ENCODE measurements at regions of chr11 and their contacts with region 1.

Region 1: GRCh38 chr11:61187505-61188130 is 15.7 kb upstream of the PGA3 start:
- DNase-seq: peak; percentile 60
- ATAC-seq: peak; percentile 97
- H3K4me3 ChIP-seq: no peak overlapping the region
- H3K27ac ChIP-seq: no peak overlapping the region
- H3K4me1 ChIP-seq: no peaks in the 10 kb centered on the region
- H3K27me3 ChIP-seq: no peaks in the 10 kb centered on the region
- CTCF ChIP-seq: peak; percentile 90 to 98 (median 96); a peak in 5 of 6 replicates
- EP300 ChIP-seq: no peak
- POLR2A ChIP-seq: no peak
- RAD21 ChIP-seq: peak; percentile 98

Region 2: GRCh38 chr11:60841797-60842667 is 345.6 kb before region 1 on chr11 and contains the start of gene CCDC86:
- CTCF ChIA-PET with region 1: interaction called, 4 read pairs
- POLR2A ChIA-PET with region 1: no interaction called
- RAD21 ChIA-PET with region 1: interaction called, 3 read pairs
- SMC1A ChIA-PET with region 1: interaction called, 4 read pairs
- in situ Hi-C with region 1: loop called (anchors 5 kb)
- intact Hi-C with region 1: no loop called
- DNase-seq: peak; percentile 78
- ATAC-seq: peak; percentile 87
- H3K4me3 ChIP-seq: peak within 1 kb of the TSS; percentile 92
- H3K27ac ChIP-seq: peak within 1 kb of the TSS; percentile 72
- H3K4me1 ChIP-seq: peaks cover 4% of the 10 kb centered on the region
- H3K27me3 ChIP-seq: no peaks in the 10 kb centered on the region
- CTCF ChIP-seq: no peak
- EP300 ChIP-seq: peak in 1 of 2 experiments; percentile 18; a peak in 1 of 4 replicates
- POLR2A ChIP-seq: peak; percentile 73
- RAD21 ChIP-seq: no peak
- polyA plus RNA-seq, gene CCDC86: 2.0 to 4.4 TPM

Region 3: DNA sequence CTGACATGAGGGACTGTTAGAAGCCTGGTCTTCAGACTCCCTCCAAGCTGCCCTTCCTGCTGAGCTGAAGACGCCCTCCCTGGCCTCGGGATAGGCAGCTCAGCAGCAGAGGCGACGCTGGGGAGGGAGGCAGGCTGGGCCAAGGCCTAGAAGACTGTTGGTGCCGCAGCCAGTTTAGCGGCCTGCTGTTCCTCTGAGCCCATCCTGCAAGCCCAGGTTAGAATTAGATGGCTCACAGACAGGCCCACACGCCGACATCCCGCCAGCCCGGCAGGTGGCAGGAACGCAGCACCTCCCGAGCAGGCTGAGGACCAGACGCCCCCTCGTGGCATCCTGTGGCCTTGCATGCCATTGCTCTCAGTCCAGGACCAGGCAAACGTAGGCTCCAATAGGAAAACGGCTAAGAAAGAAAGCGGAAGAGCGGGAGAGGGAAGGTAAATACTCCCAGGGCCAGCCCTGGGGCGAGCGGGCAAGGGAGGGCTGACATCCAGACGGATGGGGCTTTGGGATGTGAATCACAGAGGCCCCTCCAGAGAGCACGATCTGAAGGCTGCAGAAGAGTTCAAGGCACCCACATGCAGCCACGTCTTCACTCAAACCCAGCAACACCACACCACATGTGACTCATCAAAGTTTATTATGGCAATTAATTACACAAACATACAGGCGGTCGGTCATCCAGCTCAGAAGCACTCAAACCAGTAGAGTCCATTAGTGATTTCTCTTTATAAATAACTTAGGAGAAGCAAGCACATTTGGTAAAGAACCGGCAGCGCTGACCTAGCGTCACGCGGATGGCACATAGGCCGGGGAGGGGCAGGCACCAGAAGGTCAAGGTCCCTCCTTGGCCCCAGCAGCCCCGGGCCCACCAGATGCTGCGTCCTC is 57.7 kb before region 1 on chr11:
- CTCF ChIA-PET with region 1: interaction called, 72 read pairs
- POLR2A ChIA-PET with region 1: no interaction called
- RAD21 ChIA-PET with region 1: interaction called, 18 read pairs
- SMC1A ChIA-PET with region 1: interaction called, 25 read pairs
- in situ Hi-C with region 1: no loop called
- intact Hi-C with region 1: loop called (anchors 1 kb)
- DNase-seq: peak; percentile 44
- ATAC-seq: peak; percentile 97
- H3K4me3 ChIP-seq: no peak overlapping the region
- H3K27ac ChIP-seq: peak overlapping the region; percentile 52; the same call in 1 of the 2 replicates
- H3K4me1 ChIP-seq: peaks cover 7% of the 10 kb centered on the region
- H3K27me3 ChIP-seq: no peaks in the 10 kb centered on the region
- CTCF ChIP-seq: peak; percentile 100
- EP300 ChIP-seq: no peak
- POLR2A ChIP-seq: no peak; the same call in 1 of the 2 replicates
- RAD21 ChIP-seq: peak; percentile 100

Region 4: DNA sequence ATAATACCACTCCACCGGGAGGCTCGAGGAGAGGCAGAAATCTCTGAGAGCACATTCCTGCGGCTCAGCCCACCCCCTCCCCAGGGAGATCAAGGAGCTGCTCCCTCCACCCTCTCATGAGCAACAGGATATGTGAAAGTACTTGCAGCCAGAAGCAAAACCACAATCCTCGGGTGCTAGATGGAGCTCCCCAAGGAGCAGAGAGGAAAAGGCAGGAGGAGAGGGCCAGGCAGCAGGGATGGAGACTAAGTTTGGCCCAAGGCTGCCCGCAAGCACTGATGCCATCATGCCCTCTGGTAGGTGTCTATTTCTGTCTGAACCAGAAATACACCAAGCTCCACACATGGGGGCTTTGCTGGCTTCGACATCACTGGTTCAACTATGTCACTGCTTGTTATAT is 48.7 kb before region 1 on chr11:
- CTCF ChIA-PET with region 1: interaction called, 12 read pairs
- POLR2A ChIA-PET with region 1: no interaction called
- RAD21 ChIA-PET with region 1: interaction called, 4 read pairs
- SMC1A ChIA-PET with region 1: interaction called, 10 read pairs
- in situ Hi-C with region 1: no loop called
- intact Hi-C with region 1: no loop called
- DNase-seq: no peak
- ATAC-seq: peak; percentile 60
- H3K4me3 ChIP-seq: no peak overlapping the region
- H3K27ac ChIP-seq: no peak overlapping the region
- H3K4me1 ChIP-seq: peaks cover 2% of the 10 kb centered on the region; the same call in 1 of the 2 replicates
- H3K27me3 ChIP-seq: no peaks in the 10 kb centered on the region
- CTCF ChIP-seq: no peak
- EP300 ChIP-seq: no peak
- POLR2A ChIP-seq: no peak
- RAD21 ChIP-seq: no peak

Region 5: DNA sequence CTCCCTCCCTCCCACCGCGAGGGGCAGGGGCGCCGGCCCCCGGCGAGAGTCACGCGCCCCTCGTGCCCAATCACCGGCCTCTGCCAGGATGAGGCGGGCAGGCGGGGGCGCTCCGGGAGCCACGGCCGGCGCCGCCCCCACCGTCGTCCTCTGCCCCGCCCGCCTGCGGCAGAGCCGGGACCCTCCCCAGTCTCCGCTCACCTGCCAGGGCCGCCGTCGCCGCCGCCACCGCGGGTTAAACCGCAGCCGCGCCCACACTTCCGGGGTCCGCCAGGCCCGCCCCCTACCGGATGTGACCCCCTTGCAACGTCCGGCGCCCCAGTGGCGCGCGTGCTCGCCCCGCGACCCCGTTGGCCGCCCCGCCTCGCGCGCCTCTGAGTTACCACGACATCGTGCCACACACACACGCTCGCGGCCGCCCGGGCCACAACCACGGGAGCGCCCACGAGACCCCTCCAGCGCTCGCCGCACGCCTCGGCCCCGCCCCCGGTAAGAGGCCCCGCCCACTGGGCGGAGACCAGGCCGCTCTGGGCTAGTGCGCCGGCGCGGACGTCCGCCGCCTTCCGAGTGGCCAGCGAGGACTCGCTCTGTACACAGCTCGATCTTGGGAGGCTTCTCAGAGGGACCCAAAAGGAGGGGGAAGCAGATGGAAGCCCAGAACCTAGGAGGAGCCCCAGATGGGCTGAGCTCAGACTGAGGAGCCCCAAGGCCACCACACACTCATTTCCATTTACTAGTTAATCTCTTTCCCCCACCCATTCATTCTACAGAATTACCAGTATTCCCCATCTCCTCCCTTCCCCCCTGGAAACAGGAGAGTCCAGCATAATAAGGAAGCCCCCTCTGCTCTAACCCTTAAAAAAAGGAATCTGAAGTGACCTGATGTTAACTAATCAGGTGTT is 26.2 kb before region 1 on chr11 and contains the start of gene VPS37C:
- CTCF ChIA-PET with region 1: interaction called, 17 read pairs
- POLR2A ChIA-PET with region 1: no interaction called
- RAD21 ChIA-PET with region 1: interaction called, 3 read pairs
- SMC1A ChIA-PET with region 1: interaction called, 6 read pairs
- in situ Hi-C with region 1: no loop called
- intact Hi-C with region 1: no loop called
- DNase-seq: peak; percentile 71
- ATAC-seq: peak; percentile 80
- H3K4me3 ChIP-seq: peak within 1 kb of the TSS; percentile 86
- H3K27ac ChIP-seq: peak within 1 kb of the TSS; percentile 96
- H3K4me1 ChIP-seq: peaks cover 39% of the 10 kb centered on the region
- H3K27me3 ChIP-seq: no peaks in the 10 kb centered on the region
- CTCF ChIP-seq: no peak
- EP300 ChIP-seq: peak in 1 of 2 experiments; percentile 27; a peak in 1 of 4 replicates
- POLR2A ChIP-seq: peak; percentile 86
- RAD21 ChIP-seq: no peak
- polyA plus RNA-seq, gene VPS37C: 0.39 to 0.88 TPM

Region 6: DNA sequence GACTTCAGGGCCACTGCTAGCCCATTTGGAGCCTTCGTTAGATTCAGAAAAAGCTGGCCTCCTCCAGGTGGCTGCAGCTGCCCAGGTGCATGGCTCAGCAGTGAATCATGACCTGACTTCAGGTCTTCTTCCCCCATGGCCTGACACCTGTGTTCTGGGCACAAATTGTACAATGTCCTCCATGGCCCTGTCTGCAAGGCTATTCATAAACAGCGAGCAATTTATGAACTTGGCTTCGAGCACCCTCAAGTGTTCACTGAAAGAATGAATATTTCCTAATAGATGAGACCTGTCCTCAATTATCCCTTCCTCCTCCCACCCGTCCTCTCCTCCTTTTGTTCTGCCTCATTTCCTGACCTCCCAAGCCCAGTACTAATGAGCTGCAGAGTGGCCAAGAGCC is 14.2 kb before region 1 on chr11:
- CTCF ChIA-PET with region 1: interaction called, 35 read pairs
- POLR2A ChIA-PET with region 1: no interaction called
- RAD21 ChIA-PET with region 1: interaction called, 6 read pairs
- SMC1A ChIA-PET with region 1: interaction called, 9 read pairs
- in situ Hi-C with region 1: no loop called
- intact Hi-C with region 1: no loop called
- DNase-seq: no peak
- ATAC-seq: peak; percentile 69
- H3K4me3 ChIP-seq: no peak overlapping the region
- H3K27ac ChIP-seq: no peak overlapping the region
- H3K4me1 ChIP-seq: peaks cover 5% of the 10 kb centered on the region
- H3K27me3 ChIP-seq: no peaks in the 10 kb centered on the region; a peak in 1 of 4 replicates
- CTCF ChIP-seq: peak in 1 of 3 experiments; percentile 21; a peak in 2 of 6 replicates
- EP300 ChIP-seq: no peak
- POLR2A ChIP-seq: no peak
- RAD21 ChIP-seq: peak; percentile 51; the same call in 1 of the 2 replicates

Measured in GM12878 (cell line).